ENCODE measurements at regions of chr10 and their contacts with region 1.

Region 1: DNA sequence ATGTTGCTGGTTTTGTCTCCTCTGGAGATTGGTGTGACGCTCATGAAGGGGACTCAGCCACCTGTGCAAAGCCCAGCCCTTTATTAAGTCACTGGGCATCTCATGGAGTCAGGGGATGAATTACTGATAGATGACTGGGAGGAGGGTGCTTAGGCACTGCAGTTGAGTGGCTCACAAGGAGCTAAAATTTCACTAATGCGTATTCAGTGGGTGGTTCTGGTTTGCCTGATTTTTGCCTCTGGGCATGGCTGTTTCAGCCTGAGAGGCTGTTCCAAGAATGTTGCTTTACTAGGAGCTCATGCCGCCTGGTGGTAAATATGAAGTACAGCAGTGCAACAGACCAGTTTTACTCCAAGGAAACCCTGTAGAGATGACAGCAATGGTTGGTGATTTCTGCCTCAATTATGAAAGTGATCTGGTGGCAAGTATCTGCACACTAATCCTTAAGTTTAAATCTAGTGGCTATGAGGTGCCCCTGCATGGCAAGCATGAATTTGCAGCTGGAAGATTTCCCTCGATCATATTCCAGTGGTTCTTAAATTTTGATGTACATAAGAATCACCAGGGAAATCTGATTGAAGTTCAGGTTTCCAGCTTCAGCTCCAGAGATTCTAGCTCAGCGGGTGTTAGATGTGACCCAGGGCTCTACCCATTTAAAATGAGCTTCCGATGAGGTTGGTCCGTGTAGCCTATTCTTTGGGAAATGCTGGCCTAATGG is 19.9 kb downstream of the ACTA2 start:
- DNase-seq: peak; percentile 69
- ATAC-seq: peak; percentile 85
- H3K4me3 ChIP-seq: no peak overlapping the region
- H3K27ac ChIP-seq: no peak overlapping the region
- H3K4me1 ChIP-seq: peaks cover 12% of the 10 kb centered on the region
- H3K27me3 ChIP-seq: no peaks in the 10 kb centered on the region
- CTCF ChIP-seq: peak; percentile 95

Region 2: GRCh38 chr10:88565072-88565471 is 367.6 kb before region 1 on chr10:
- CTCF ChIA-PET with region 1: interaction called, 6 read pairs
- POLR2A ChIA-PET with region 1: no interaction called
- in situ Hi-C with region 1: no loop called
- intact Hi-C with region 1: loop called (anchors 2 kb)
- DNase-seq: no peak
- ATAC-seq: peak; percentile 91
- H3K4me3 ChIP-seq: no peak overlapping the region
- H3K27ac ChIP-seq: no peak overlapping the region; the same call in 1 of the 2 replicates
- H3K4me1 ChIP-seq: no peaks in the 10 kb centered on the region
- H3K27me3 ChIP-seq: no peaks in the 10 kb centered on the region
- CTCF ChIP-seq: peak; percentile 59; the same call in 1 of the 2 replicates

Region 3: GRCh38 chr10:88707429-88708285 is 225.0 kb before region 1 on chr10:
- CTCF ChIA-PET with region 1: interaction called, 12 read pairs
- POLR2A ChIA-PET with region 1: no interaction called
- in situ Hi-C with region 1: no loop called
- intact Hi-C with region 1: no loop called
- DNase-seq: peak; percentile 70
- ATAC-seq: peak; percentile 89
- H3K4me3 ChIP-seq: no peak overlapping the region
- H3K27ac ChIP-seq: peak overlapping the region; percentile 71
- H3K4me1 ChIP-seq: peaks cover 18% of the 10 kb centered on the region
- H3K27me3 ChIP-seq: no peaks in the 10 kb centered on the region
- CTCF ChIP-seq: no peak

Region 4: DNA sequence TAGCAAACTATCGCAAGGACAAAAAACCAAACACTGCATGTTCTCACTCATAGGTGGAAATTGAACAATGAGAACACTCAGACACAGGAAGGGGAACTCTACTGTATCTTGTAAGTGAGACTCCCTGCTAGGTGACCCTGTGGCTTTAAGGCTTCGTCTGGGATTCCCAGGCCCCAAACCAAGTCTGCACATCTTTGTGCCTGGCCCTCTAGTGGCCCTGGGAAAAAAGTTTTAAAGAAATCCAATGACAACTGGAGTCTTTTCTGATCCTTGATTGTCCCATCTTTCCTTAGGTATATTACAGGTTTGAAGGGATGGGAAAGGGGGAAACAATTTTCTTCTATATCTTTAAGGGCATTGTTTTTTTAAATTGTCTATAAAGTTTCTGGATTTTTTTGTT is 140.8 kb before region 1 on chr10:
- CTCF ChIA-PET with region 1: no interaction called
- POLR2A ChIA-PET with region 1: no interaction called
- in situ Hi-C with region 1: no loop called
- intact Hi-C with region 1: no loop called
- DNase-seq: peak; percentile 10
- ATAC-seq: peak; percentile 90
- H3K4me3 ChIP-seq: no peak overlapping the region
- H3K27ac ChIP-seq: no peak overlapping the region
- H3K4me1 ChIP-seq: peaks cover 4% of the 10 kb centered on the region; the same call in 1 of the 2 replicates
- H3K27me3 ChIP-seq: no peaks in the 10 kb centered on the region
- CTCF ChIP-seq: peak; percentile 85

Region 5: GRCh38 chr10:88986549-88987242 is 54.0 kb after region 1 on chr10:
- CTCF ChIA-PET with region 1: interaction called, 10 read pairs
- POLR2A ChIA-PET with region 1: no interaction called
- in situ Hi-C with region 1: no loop called
- intact Hi-C with region 1: loop called (anchors 1 kb)
- DNase-seq: no peak
- ATAC-seq: no peak
- H3K4me3 ChIP-seq: no peak overlapping the region
- H3K27ac ChIP-seq: no peak overlapping the region
- H3K4me1 ChIP-seq: 0 out of 2 replicates have a peak, but pooled peaks cover 5% of the 10 kb centered on the region
- H3K27me3 ChIP-seq: no peaks in the 10 kb centered on the region
- CTCF ChIP-seq: peak; percentile 83; the same call in 1 of the 2 replicates

Region 6: DNA sequence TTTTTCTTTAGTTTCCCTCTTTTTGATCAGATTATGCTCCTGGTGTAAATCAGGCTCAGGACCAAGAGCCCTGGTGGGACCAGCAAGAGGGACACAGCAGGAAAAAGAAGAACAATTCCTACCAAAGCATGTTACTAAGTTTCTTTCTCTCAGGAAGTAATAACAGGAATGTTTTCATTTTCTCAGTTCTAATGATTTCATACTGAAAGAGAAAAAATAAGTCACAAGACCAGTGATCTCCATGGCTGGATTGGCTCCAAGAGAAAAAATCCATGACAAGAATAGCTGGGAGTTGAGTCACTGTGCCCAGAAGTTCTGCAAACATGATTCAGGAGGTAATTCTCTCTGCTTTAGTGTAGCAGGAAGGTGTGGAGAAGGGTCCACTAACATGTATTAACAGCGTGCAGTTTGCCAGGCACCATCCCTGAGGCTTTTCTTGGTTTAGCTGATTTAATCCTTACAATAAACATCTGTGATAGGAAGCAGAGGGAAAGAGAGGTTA is 345.4 kb after region 1 on chr10:
- CTCF ChIA-PET with region 1: no interaction called
- POLR2A ChIA-PET with region 1: interaction called, 10 read pairs
- in situ Hi-C with region 1: no loop called
- intact Hi-C with region 1: no loop called
- DNase-seq: peak; percentile 94
- ATAC-seq: peak; percentile 96
- H3K4me3 ChIP-seq: peak overlapping the region in 1 of 2 experiments; percentile 12; a peak in 1 of 4 replicates
- H3K27ac ChIP-seq: peak overlapping the region; percentile 98
- H3K4me1 ChIP-seq: peaks cover 36% of the 10 kb centered on the region
- H3K27me3 ChIP-seq: no peaks in the 10 kb centered on the region
- CTCF ChIP-seq: no peak

Region 7: GRCh38 chr10:89929282-89930026 is 996.8 kb after region 1 on chr10:
- CTCF ChIA-PET with region 1: no interaction called
- POLR2A ChIA-PET with region 1: no interaction called
- in situ Hi-C with region 1: no loop called
- intact Hi-C with region 1: no loop called
- DNase-seq: no peak
- ATAC-seq: no peak
- H3K4me3 ChIP-seq: no peak overlapping the region
- H3K27ac ChIP-seq: no peak overlapping the region
- H3K4me1 ChIP-seq: no peaks in the 10 kb centered on the region
- H3K27me3 ChIP-seq: 0 out of 2 replicates have a peak, but pooled peaks cover 2% of the 10 kb centered on the region
- CTCF ChIP-seq: no peak